Body of pancreas (tissue), 4 donors: ENCODE measurements at regions of chr9 and their contacts with region 1.

Region 1: DNA sequence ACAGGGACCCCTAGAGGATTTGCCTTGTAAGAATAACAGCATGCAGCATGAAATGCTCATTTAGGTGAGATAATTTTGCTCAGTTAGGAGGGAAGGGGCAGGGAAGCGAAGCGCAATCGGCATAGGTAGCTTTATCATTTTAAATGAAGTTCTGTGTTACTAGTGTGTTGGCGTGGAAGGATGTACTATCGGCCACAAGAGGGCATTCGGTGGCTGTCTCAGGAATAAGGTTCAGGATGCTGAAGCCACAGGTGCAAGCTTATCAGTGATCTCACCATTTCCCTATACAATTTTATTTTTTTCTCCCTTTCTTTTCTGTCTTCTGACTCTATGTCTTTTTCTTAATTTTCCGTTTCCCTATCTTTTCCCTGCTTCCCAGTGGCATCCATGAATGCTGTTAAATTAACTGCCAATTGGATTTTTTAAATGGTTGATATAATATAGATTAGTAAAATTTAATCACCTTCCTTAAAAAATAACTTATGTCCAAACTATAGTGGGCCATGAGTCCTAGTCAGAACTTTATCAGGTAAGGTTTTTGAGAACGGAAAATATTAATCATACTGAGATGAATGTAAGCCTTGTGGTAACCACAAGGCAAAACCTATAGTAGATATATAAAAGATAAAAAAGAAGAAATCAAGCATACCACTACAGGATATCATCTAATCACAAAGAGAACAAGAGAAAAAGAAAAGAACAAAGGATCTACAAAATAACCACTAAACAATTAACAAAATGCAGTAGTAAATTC is 1.2 kb upstream of the INSL6 start:
- DNase-seq: peak; percentile 60 to 76 (median 68)
- ATAC-seq: peak; percentile 81
- H3K4me3 ChIP-seq: no peak overlapping the region
- H3K27ac ChIP-seq: no peak overlapping the region
- H3K4me1 ChIP-seq: no peaks in the 10 kb centered on the region
- H3K27me3 ChIP-seq: no peaks in the 10 kb centered on the region
- CTCF ChIP-seq: peak; percentile 31 to 87 (median 70)
- POLR2A ChIP-seq: no peak

Region 2: GRCh38 chr9:4939118-4939561 is 247.5 kb before region 1 on chr9:
- intact Hi-C with region 1: no loop called
- DNase-seq: no peak
- ATAC-seq: no peak
- H3K4me3 ChIP-seq: no peak overlapping the region
- H3K27ac ChIP-seq: peak overlapping the region in 2 of 4 donors; percentile 8
- H3K4me1 ChIP-seq: peaks cover 3% of the 10 kb centered on the region
- H3K27me3 ChIP-seq: no peaks in the 10 kb centered on the region
- CTCF ChIP-seq: no peak
- POLR2A ChIP-seq: no peak

Region 3: DNA sequence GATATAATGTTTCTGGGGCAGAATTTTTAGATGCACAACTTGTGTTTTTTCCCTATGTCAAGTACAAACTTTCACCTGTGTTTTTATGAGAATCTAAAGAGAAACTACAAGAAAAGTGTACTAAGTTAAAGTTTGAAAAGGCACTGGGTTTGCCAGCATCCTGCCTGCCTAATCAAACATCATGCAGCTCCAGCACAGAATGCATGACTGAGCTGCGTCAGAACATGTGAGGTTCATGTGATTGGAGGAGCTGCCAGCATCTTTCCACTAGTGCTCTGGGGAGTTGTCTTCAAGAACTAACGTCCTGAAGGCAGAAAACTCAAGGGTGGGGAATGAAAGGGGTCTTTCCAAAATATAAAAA is 396.2 kb after region 1 on chr9:
- intact Hi-C with region 1: loop called (anchors 10 kb)
- DNase-seq: no peak
- ATAC-seq: no peak
- H3K4me3 ChIP-seq: no peak overlapping the region
- H3K27ac ChIP-seq: no peak overlapping the region
- H3K4me1 ChIP-seq: no peaks in the 10 kb centered on the region
- H3K27me3 ChIP-seq: no peaks in the 10 kb centered on the region
- CTCF ChIP-seq: no peak
- POLR2A ChIP-seq: no peak